AG04449 (cell line): ENCODE measurements at regions of chr16 and their contacts with region 1.

Region 1: DNA sequence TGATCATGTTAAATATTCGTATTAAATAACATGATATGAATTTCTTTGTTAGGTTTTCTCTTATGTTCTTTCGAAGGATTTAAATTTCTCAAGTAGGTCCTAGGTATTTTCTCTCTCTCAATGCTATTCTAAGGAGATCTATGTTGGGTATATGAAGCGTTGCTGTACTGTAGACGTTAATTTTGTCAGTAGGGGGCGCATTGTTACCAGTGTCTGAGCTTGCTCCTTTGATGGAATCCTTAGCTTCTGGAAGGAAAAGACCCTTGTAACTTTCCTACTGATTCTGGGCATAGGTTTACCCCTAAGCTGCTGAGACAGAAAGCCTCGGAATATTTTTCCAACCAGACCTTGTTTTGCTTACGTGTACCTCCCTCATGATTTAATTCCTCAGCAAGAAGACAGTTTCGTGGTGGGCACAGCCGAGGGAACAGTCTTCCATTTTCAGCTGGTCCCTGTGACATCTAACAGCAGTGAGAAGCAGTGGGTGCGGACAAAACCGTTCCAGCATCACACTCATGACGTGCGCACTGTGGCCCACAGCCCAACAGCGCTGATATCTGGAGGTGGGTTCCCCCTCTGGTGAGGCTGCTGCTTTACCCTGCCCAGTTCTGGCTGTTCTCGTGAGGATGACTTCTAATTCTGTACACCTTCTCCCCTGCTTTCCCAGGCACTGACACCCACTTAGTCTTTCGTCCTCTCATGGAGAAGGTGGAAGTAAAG is 17.9 kb downstream of the UTP4 start:
- DNase-seq: no peak
- H3K4me3 ChIP-seq: no peak overlapping the region
- CTCF ChIP-seq: peak; percentile 71

Region 2: GRCh38 chr16:68811503-68811902 is 338.8 kb before region 1 on chr16:
- CTCF ChIA-PET with region 1: no interaction called
- POLR2A ChIA-PET with region 1: no interaction called
- DNase-seq: no peak
- H3K4me3 ChIP-seq: no peak overlapping the region
- CTCF ChIP-seq: no peak

Region 3: DNA sequence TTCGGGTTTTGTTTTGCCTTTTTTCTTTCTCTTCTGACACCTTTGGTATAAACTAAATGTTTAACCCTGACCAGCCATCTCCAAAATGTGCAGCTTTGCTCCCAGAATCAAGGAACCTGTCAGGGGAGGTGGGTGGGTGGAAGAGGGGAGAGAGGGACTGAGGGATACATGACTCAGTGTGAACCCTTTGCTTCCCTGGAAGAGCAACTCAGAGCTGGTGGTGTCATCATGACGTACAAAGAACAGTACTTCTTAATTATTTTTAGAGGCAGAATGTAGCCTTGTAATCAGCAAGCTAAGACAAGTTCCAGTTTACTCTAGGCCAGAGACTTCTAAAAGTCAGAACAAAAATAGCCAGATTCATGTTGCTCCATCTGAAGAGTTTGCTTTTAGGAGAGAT is 164.5 kb before region 1 on chr16:
- CTCF ChIA-PET with region 1: no interaction called
- POLR2A ChIA-PET with region 1: no interaction called
- DNase-seq: no peak
- H3K4me3 ChIP-seq: no peak overlapping the region
- CTCF ChIP-seq: no peak

Region 4: GRCh38 chr16:69132424-69133252 is 17.7 kb before region 1 on chr16 and contains the starts of genes CHTF8 and UTP4:
- CTCF ChIA-PET with region 1: interaction called, 34 read pairs
- POLR2A ChIA-PET with region 1: no interaction called
- DNase-seq: no peak
- H3K4me3 ChIP-seq: peak within 1 kb of the TSS; percentile 99
- CTCF ChIP-seq: no peak

Region 5: DNA sequence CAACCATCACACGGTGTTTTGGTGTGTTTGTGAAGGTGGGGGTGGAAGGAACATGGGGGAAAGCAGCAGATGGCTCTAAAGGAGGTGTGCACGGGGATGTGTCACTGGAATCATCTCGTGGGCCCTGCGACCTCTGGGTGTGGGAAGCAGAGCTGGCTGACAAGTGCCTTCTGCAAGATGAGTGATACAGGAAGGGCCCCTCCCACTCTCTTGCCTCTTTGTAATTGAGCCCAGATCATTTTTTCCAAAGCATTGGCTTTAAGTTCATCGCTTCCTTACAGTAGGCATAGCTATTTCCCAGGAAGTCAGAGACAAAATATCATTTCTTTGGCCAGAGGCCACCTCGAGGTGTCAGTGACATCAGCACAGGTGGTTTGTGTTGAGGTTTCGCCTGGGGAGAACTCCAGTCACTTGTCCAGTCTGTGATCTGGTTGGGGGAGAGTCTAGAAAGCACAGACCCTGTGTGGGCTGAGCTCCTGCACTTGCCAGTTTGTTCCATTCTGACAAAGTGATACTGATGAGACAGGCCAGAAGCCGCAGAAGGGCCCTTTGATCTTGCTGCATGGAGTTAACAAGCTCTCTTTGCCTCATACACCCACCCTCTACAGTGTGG is 16.0 kb after region 1 on chr16:
- CTCF ChIA-PET with region 1: interaction called, 44 read pairs
- POLR2A ChIA-PET with region 1: no interaction called
- DNase-seq: no peak
- H3K4me3 ChIP-seq: no peak overlapping the region
- CTCF ChIP-seq: no peak

Region 6: DNA sequence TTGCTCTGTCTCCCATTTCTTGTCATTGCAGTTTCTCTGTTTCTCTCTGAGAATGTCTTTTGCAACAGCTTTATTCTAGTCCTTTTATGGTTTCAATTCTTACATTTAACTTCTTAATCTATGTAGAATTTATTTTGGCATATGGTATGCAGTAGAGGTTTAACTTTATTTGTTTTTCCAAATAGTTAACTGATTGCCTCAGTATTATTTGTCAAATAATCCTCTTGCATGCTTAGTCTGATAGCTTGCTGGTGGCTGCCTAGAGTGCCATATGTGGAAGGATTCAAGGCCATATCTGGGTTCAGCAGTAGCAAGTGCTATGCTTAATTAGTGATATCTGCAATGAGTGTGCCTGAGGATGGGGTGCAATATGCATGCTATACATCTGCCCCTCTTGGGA is 43.5 kb after region 1 on chr16:
- CTCF ChIA-PET with region 1: interaction called, 10 read pairs
- POLR2A ChIA-PET with region 1: no interaction called
- DNase-seq: no peak
- H3K4me3 ChIP-seq: no peak overlapping the region
- CTCF ChIP-seq: no peak

Region 7: DNA sequence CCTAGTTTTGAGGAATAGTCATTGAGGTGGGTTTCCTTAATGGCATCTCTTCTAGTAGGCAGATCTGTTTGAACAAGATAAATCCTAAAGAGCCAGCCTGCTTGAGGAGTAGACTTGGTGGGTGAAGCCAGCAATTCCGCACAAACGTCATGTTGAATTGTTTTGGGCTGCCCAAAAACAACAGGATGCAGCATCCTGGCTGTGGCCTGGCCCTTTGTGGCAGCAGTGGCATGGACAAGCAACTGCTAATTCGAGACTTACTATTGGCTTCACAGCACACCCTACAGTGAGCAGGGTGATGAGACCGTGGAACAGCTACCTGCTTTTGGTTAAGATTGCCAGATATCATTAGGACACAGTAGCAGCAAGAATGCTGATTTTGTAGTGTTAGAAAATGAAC is 151.6 kb after region 1 on chr16:
- CTCF ChIA-PET with region 1: interaction called, 15 read pairs
- POLR2A ChIA-PET with region 1: no interaction called
- DNase-seq: no peak
- H3K4me3 ChIP-seq: no peak overlapping the region
- CTCF ChIP-seq: no peak

Region 8: GRCh38 chr16:69310653-69311532 is 160.6 kb after region 1 on chr16 and contains the start of gene VPS4A:
- CTCF ChIA-PET with region 1: interaction called, 16 read pairs
- POLR2A ChIA-PET with region 1: no interaction called
- DNase-seq: peak; percentile 76
- H3K4me3 ChIP-seq: peak within 1 kb of the TSS; percentile 82
- CTCF ChIP-seq: peak; percentile 99